Ovary (tissue), 10 donors: ENCODE measurements at regions of chr9 and their contacts with region 1.

Region 1: DNA sequence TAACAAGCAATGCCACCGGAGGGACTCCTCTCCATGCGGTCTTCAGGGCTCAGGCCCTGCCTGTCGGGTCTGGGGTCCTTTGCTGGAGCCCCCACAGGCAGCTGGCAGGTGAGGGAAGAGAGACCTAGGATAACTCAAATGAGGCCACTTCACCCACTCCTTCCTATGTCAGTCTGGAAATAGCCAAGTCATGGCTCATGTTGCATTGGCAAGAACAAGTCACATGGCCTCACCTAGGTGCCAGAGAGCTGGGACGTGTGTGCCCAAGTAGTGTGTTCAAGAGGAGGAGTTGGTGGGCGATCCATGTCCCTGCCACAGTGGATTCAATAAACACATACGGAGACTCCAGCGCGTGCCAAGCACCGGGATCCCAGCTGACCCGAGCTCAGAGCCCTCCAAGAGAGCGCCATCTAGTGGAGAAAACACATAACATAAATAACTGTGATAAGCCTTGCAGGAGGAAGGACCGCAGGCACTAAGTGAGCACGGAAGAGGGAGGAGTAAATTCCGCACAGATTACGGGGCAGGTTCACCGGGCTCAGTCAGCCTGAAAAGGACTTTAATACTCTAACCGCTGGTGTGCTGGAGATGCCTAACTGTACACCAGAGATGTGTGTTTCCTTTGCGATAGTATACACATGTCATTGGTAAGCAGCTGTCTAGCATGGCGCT is 580.8 kb downstream of the CCDC171 start:
- DNase-seq: peak; percentile 29 to 68 (median 52)
- H3K4me3 ChIP-seq: no peak overlapping the region
- H3K27ac ChIP-seq: no peak overlapping the region
- H3K4me1 ChIP-seq: no peaks in the 10 kb centered on the region
- H3K27me3 ChIP-seq: no peaks in the 10 kb centered on the region
- CTCF ChIP-seq: peak in 1 of 3 donors; percentile 22
- EP300 ChIP-seq: no peak
- POLR2A ChIP-seq: no peak

Region 2: DNA sequence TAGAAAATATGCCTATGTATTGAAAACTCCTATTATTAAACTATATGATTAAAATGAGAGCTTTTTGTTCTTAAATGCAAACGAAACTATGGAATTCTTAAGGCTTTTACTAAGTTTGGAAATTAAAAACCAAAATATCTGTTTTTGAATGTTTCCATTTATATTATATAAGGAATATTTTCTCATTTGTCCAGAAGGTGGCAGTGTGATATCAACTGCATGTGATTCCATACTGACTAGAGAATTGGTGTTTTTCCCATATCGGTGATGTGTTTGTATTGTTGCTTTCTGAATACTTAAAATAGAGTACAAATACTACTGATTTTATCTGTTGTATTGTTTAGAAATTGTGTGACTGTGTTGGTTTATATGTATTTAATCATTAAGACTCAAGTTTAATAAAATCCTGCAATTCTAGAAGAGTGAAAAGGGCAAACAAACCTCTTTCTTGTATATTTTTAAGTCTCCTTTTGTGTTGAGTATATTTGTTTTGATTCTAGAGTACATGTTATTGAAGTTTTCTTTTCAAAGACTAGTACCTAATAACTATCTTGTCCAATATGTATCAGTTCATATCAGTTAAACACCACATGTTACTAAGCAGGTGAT is 260.0 kb before region 1 on chr9:
- intact Hi-C with region 1: loop called in 2 of 4 experiments (anchors 10 kb)
- DNase-seq: no peak
- H3K4me3 ChIP-seq: no peak overlapping the region
- H3K27ac ChIP-seq: no peak overlapping the region
- H3K4me1 ChIP-seq: no peaks in the 10 kb centered on the region
- H3K27me3 ChIP-seq: no peaks in the 10 kb centered on the region
- CTCF ChIP-seq: peak; percentile 30 to 77 (median 62)
- EP300 ChIP-seq: no peak
- POLR2A ChIP-seq: no peak

Region 3: GRCh38 chr9:16985559-16986348 is 852.1 kb after region 1 on chr9:
- intact Hi-C with region 1: no loop called
- DNase-seq: no peak
- H3K4me3 ChIP-seq: no peak overlapping the region
- H3K27ac ChIP-seq: no peak overlapping the region
- H3K4me1 ChIP-seq: no peaks in the 10 kb centered on the region
- H3K27me3 ChIP-seq: no peaks in the 10 kb centered on the region
- CTCF ChIP-seq: no peak
- EP300 ChIP-seq: no peak
- POLR2A ChIP-seq: no peak